Activated naive CD4-positive, alpha-beta T cell treated with anti-CD3 and anti-CD28 coated beads for 36 hours (primary cell): ENCODE measurements at regions of chr12 and their contacts with region 1.

Region 1: DNA sequence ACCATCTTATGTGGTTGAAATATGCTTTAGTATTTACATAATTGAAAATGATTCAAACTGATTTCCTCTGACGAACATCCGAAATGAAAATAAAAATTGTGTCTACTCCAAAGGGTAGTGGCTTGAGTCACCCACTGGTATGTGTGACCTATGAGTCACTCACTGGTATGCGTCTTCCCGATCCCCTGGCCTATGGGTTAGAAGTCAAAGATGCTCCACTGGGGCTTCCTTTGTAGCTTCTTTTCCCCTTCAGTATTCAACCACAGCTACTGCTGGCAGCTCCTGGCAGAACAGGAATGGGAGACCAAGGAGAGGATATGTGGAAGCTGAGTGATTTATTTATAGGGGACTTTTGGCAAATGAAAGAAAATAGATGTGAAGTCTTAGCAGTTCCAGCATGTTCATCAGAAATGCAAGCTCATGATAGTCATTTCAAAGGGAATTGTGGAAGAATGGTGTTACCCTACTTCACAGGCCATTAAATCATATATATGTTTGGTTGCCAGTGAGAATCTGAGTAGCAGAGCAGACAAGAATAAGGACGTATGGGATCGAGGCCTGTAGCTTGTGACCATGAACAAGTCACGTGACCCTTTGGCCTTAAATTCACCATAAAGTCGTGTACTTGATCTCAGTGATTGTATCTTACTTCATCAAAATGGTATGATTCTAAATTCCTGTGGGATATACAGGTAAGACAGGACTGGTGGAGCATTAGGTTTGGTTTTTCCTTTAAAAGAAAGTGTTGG is 108.3 kb downstream of the CRADD start:
- DNase-seq: peak; percentile 77
- H3K4me3 Mint-ChIP-seq: no peak overlapping the region
- H3K27ac Mint-ChIP-seq: peak overlapping the region; percentile 89
- H3K4me1 Mint-ChIP-seq: peaks cover 72% of the 10 kb centered on the region
- H3K27me3 Mint-ChIP-seq: no peaks in the 10 kb centered on the region

Region 2: GRCh38 chr12:92912052-92912451 is 873.4 kb before region 1 on chr12:
- CTCF ChIA-PET with region 1: no interaction called
- intact Hi-C with region 1: loop called (anchors 5 kb)
- DNase-seq: peak; percentile 60
- H3K4me3 Mint-ChIP-seq: no peak overlapping the region
- H3K27ac Mint-ChIP-seq: peak overlapping the region; percentile 74
- H3K4me1 Mint-ChIP-seq: peaks cover 56% of the 10 kb centered on the region
- H3K27me3 Mint-ChIP-seq: no peaks in the 10 kb centered on the region

Region 3: GRCh38 chr12:93243689-93244513 is 541.5 kb before region 1 on chr12:
- CTCF ChIA-PET with region 1: no interaction called
- intact Hi-C with region 1: loop called (anchors 10 kb)
- DNase-seq: peak; percentile 53
- H3K4me3 Mint-ChIP-seq: peak overlapping the region; percentile 49
- H3K27ac Mint-ChIP-seq: peak overlapping the region; percentile 82
- H3K4me1 Mint-ChIP-seq: peaks cover 34% of the 10 kb centered on the region
- H3K27me3 Mint-ChIP-seq: no peaks in the 10 kb centered on the region

Region 4: GRCh38 chr12:93668919-93669418 is 116.5 kb before region 1 on chr12:
- CTCF ChIA-PET with region 1: no interaction called
- intact Hi-C with region 1: loop called (anchors 2 kb)
- DNase-seq: no peak
- H3K4me3 Mint-ChIP-seq: no peak overlapping the region
- H3K27ac Mint-ChIP-seq: peak overlapping the region; percentile 82
- H3K4me1 Mint-ChIP-seq: peaks cover 28% of the 10 kb centered on the region
- H3K27me3 Mint-ChIP-seq: peaks cover 5% of the 10 kb centered on the region

Region 5: DNA sequence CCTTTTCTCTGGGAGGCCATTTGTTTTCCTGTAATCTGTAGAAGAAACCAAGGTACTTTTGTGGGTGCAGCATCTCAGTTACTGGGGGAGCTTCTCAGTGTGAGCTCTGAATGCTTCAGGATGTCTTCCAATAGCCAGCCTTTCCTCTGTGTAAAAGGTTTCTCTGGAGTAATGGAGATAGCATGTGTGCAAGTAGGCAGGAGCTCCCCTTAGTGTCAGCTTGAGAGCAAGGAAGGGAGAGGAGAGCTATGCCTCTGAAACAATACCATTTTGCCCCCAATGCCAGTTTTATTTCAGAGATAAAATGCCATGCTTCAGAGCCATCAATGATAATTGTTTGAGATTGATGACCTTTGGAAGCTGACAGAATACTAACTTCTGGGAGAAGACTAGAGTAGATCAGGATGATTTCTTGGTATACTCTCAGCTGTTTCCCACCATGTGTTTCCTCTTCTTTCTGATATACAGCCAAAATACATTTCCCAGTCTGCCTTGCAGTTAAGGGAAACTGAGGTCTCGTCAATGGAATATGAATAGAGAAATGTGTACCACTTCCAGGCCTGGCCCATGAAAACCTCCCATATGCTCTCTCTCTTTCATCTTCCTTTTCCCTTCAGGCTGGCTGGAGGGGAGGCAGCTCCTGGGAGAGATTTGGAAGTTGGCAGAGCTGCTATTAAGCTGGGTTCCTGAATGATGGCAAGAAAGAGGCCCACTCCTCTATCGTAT is 17.4 kb after region 1 on chr12:
- CTCF ChIA-PET with region 1: interaction called, 5 read pairs
- intact Hi-C with region 1: loop called (anchors 1 kb)
- DNase-seq: no peak
- H3K4me3 Mint-ChIP-seq: no peak overlapping the region
- H3K27ac Mint-ChIP-seq: no peak overlapping the region
- H3K4me1 Mint-ChIP-seq: peaks cover 56% of the 10 kb centered on the region
- H3K27me3 Mint-ChIP-seq: no peaks in the 10 kb centered on the region

Region 6: DNA sequence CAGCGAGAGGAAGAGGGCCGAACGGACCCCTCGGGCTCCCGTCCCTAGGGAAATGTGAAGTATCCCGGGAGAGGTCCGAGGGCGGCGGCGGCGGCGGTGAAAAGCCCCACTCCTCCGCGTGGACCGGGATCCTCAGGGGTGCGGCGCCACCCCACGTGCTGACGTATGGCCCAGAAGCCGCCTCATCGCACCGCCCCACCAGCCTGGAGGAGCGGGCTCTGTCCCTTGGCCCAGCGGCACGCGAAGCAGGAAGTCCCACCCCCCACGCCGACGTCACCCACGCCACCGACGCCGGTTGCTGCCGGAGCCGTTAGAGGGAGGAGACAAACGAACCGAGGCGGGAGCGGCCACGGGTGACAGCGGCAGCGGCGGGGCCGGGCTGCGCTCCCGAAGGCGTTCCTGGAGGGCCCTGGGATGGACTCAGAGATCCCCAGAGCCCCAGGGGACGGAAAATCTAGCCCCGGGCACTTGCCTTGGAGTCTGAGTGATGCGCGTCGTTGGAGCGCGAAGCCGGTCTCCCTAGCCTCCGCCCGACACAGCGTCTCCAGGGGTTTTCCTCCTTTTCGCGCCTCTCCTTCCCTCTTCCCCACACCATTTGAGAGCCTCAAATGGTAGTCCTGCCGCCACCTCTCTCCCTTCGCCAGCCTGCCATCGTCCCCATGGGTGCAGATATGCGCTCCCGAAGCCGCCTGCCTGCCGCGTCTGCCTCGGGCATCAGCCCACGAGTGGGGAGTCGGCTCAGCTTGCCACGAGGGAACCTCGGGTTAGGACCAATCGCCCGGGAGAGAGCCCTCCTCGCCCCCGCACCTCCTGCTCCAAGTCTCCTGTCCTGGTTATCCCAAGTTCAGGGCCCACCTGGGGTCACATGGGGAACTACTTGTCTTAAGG is 674.5 kb after region 1 on chr12 and contains the start of gene CEP83:
- CTCF ChIA-PET with region 1: no interaction called
- intact Hi-C with region 1: loop called (anchors 5 kb)
- DNase-seq: peak; percentile 98
- H3K4me3 Mint-ChIP-seq: peak within 1 kb of the TSS; percentile 97
- H3K27ac Mint-ChIP-seq: peak within 1 kb of the TSS; percentile 91
- H3K4me1 Mint-ChIP-seq: peaks cover 29% of the 10 kb centered on the region
- H3K27me3 Mint-ChIP-seq: peaks cover 5% of the 10 kb centered on the region
- total RNA-seq, gene CEP83: 19.0 to 21.5 TPM